ENCODE measurements at regions of chr1 and their contacts with region 1.

Region 1: DNA sequence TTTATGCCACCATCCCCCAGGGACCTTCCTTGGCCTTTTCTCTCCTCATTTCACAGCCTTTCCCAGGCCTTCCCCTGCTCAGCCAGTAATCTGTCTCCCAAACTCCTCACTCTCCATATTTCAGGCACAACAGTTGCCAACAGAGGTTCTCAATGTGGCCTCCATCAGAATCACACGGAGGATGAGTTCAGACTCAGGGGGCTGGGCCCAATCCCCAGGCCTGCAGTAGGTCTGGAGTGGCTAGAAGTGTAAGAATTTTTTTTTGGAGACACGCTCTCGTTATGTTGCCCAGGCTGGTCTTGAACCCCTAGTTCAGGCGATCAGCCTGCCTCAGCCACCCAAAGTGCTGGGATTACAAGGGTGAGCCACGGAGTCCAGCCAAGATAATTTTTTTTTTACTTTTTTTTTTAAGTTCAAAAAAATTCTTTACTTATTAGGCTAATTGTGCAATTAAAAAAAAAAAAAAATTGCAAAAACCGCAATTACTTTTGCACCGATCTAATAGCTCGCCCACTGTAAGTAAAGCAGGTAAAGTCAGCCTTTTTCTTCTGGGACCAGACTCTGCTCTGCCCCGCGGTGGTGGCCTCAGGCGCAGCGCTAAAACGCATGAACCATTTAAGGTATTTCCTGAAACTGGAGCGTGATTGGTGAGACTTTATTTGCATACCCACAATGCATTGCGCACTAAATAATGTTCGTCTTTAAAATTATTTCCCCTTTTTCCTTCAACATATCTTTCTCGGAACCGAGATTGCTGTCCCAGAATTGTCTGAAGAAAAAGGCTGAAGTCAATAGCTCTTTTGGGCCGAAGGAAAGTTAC is 18.7 kb downstream of the KIAA2013 start:
- DNase-seq: peak; percentile 69 to 96 (median 94)
- ATAC-seq: peak; percentile 75
- H3K4me3 ChIP-seq: peak overlapping the region; percentile 92
- H3K4me3 Mint-ChIP-seq: peak overlapping the region; percentile 92 to 97 (median 94)
- H3K27ac ChIP-seq: peak overlapping the region; percentile 99
- H3K27ac Mint-ChIP-seq: peak overlapping the region; percentile 99 to 100 (median 100)
- H3K4me1 ChIP-seq: peaks cover 19% of the 10 kb centered on the region in 2 donors
- H3K4me1 Mint-ChIP-seq: peaks cover 9 to 45% (median 34%) of the 10 kb centered on the region in 7 donors
- H3K27me3 ChIP-seq: peaks cover 0 to 4% of the 10 kb centered on the region in 2 donors
- H3K27me3 Mint-ChIP-seq: peaks cover 0 to 41% (median under 1%) of the 10 kb centered on the region in 5 donors

Region 2: DNA sequence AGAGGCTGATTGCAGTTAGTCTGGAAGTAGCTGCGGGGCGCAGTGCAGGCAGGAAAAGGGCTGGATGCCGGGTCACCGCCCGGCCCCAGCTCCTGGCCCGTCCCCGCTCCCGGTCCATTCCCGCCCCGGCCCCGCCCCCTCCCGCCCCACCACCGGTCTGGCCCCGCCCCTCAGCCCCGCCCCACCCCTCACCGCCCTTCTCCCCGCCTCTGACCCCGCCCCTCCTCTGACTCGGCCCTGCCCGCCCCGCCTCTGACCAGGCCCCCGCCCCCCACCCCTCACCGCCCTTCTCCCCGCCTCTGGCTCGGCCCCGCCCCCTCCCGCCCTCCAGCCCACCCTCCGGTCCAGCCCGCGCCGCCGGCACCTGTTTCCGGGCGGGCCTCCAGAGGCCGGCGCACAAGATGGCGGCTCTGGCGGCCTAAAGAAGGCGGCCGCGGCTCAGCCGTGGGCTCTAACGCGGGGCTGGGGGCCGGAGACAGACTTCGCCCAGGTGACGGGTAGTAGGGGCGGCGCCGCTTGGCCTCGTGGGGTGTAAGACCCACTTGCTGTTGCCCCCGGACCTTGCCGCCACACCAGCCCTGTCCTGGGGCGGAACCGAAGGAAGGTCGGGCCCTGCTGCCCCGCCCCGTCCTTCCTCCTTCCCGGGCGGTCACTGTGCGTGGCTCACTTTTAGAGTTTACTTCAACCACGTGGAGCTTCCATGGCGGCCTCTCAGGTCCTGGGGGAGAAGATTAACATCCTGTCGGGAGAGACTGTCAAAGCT is 634.5 kb before region 1 on chr1 and contains the start of gene UBIAD1:
- CTCF ChIA-PET with region 1: no interaction called
- POLR2A ChIA-PET with region 1: no interaction called
- intact Hi-C with region 1: loop called in 1 of 2 experiments (anchors 1 kb)
- DNase-seq: peak; percentile 66 to 84 (median 72)
- ATAC-seq: peak; percentile 93
- H3K4me3 ChIP-seq: peak within 1 kb of the TSS; percentile 71
- H3K4me3 Mint-ChIP-seq: peak within 1 kb of the TSS; percentile 84 to 99 (median 96)
- H3K27ac ChIP-seq: peak within 1 kb of the TSS; percentile 97
- H3K27ac Mint-ChIP-seq: peak within 1 kb of the TSS; percentile 90 to 96 (median 92)
- H3K4me1 ChIP-seq: peaks cover 21 to 30% of the 10 kb centered on the region in 2 donors
- H3K4me1 Mint-ChIP-seq: peaks cover 23 to 41% (median 32%) of the 10 kb centered on the region in 7 donors
- H3K27me3 ChIP-seq: no peaks in the 10 kb centered on the region
- H3K27me3 Mint-ChIP-seq: peaks cover 0 to 6% (median 0%) of the 10 kb centered on the region in 5 donors
- total RNA-seq, gene UBIAD1: 21.7 to 41.7 (median 32.9) TPM

Region 3: DNA sequence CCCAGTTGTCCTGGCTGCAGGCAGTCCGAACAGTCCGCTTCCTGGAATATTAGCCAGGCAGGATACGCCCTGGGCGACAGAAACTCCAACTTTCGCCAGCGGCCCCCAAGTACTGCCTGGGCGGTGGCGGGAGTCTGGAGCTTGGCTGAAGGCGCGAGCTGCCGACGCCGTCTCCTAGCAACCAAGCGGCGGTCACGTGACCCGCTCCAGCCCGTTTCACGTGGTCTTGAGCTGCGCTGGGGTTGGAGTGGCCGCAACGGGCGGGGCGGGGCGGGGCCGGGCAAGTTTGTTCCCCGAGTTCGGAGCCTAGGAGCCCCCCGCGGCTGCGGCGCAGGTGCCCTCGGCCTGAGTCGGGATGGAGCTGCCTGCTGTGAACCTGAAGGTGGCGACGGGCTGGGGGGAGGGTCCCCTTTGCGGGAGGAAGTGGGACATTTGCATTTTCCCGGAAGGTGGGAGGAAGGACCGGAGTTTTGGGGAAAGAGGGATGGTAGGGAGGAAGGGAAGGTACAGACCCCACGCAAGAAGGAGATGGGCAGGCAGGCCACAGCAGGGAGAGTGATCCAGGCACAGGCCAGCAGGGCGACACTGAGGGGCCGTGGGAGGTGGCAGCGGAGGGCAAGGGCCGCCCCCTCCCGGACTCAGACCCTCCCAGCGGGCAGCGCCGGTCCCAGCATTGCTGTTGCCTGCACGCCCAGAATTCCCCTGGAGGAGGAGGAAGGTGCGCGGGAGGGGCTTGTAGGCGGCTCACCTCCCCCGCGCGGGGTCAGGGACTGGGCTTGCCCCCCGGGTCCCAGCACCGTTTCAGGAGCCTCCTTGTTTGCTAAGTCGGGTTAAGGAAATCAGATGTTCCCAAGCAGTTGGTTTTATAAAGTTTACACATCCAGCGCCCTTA is 171.4 kb before region 1 on chr1 and contains the start of gene AGTRAP:
- CTCF ChIA-PET with region 1: no interaction called
- POLR2A ChIA-PET with region 1: interaction called, 13 read pairs
- intact Hi-C with region 1: loop called (anchors 1 to 5 kb)
- DNase-seq: peak; percentile 62 to 84 (median 71)
- ATAC-seq: peak; percentile 78
- H3K4me3 ChIP-seq: peak within 1 kb of the TSS; percentile 92
- H3K4me3 Mint-ChIP-seq: peak within 1 kb of the TSS; percentile 84 to 96 (median 92)
- H3K27ac ChIP-seq: peak within 1 kb of the TSS; percentile 79
- H3K27ac Mint-ChIP-seq: peak within 1 kb of the TSS; percentile 3 to 95 (median 83)
- H3K4me1 ChIP-seq: peaks cover 38 to 52% of the 10 kb centered on the region in 2 donors
- H3K4me1 Mint-ChIP-seq: peaks cover 51 to 80% (median 76%) of the 10 kb centered on the region in 7 donors
- H3K27me3 ChIP-seq: no peaks in the 10 kb centered on the region
- H3K27me3 Mint-ChIP-seq: no peaks in the 10 kb centered on the region
- total RNA-seq, gene AGTRAP: 28.2 to 82.5 (median 32.7) TPM

Region 4: GRCh38 chr1:11862890-11863289 is 44.6 kb before region 1 on chr1:
- CTCF ChIA-PET with region 1: no interaction called
- POLR2A ChIA-PET with region 1: interaction called, 3 read pairs
- intact Hi-C with region 1: loop called in 1 of 2 experiments (anchors 1 kb)
- DNase-seq: no peak
- ATAC-seq: no peak
- H3K4me3 ChIP-seq: no peak overlapping the region
- H3K4me3 Mint-ChIP-seq: no peak overlapping the region
- H3K27ac ChIP-seq: no peak overlapping the region
- H3K27ac Mint-ChIP-seq: no peak overlapping the region
- H3K4me1 ChIP-seq: no peaks in the 10 kb centered on the region
- H3K4me1 Mint-ChIP-seq: peaks cover 0 to 4% (median 0%) of the 10 kb centered on the region in 7 donors
- H3K27me3 ChIP-seq: peaks cover 0 to 11% of the 10 kb centered on the region in 2 donors
- H3K27me3 Mint-ChIP-seq: peaks cover 35 to 47% (median 42%) of the 10 kb centered on the region in 5 donors

Region 5: DNA sequence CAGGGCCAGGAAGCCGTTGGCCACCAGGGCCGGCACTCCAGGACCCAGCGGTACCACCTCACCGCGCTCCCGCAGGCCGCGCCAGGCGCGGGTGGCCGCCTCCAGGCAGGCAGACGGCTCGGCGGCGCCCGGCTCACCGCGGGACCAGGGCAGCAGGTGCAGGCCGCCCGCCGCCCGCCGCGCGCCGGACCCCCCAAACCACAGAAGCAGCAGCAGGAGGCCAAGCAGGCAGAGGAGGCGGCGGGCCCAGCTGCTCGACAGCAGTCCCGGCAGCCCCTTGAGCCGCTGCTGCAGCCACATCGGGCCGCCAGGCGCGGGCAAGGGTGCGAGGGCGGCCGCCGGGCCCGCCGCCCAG is 18.4 kb after region 1 on chr1:
- CTCF ChIA-PET with region 1: interaction called, 3 read pairs
- POLR2A ChIA-PET with region 1: interaction called, 59 read pairs
- intact Hi-C with region 1: loop called (anchors 1 kb)
- DNase-seq: peak in 3 of 9 donors; percentile 22 to 27 (median 23)
- ATAC-seq: peak; percentile 28
- H3K4me3 ChIP-seq: no peak overlapping the region
- H3K4me3 Mint-ChIP-seq: peak overlapping the region in 4 of 10 donors; percentile 82 to 90 (median 84)
- H3K27ac ChIP-seq: peak overlapping the region; percentile 7
- H3K27ac Mint-ChIP-seq: peak overlapping the region in 4 of 9 donors; percentile 60 to 81 (median 71)
- H3K4me1 ChIP-seq: peaks cover 14 to 28% of the 10 kb centered on the region in 2 donors
- H3K4me1 Mint-ChIP-seq: peaks cover 24 to 50% (median 31%) of the 10 kb centered on the region in 7 donors
- H3K27me3 ChIP-seq: no peaks in the 10 kb centered on the region
- H3K27me3 Mint-ChIP-seq: no peaks in the 10 kb centered on the region

Region 6: GRCh38 chr1:12019858-12020509 is 112.5 kb after region 1 on chr1:
- CTCF ChIA-PET with region 1: interaction called, 3 read pairs
- POLR2A ChIA-PET with region 1: interaction called, 40 read pairs
- intact Hi-C with region 1: loop called (anchors 1 kb)
- DNase-seq: no peak
- ATAC-seq: no peak
- H3K4me3 ChIP-seq: peak overlapping the region; percentile 77
- H3K4me3 Mint-ChIP-seq: peak overlapping the region; percentile 82 to 99 (median 92)
- H3K27ac ChIP-seq: peak overlapping the region; percentile 73
- H3K27ac Mint-ChIP-seq: peak overlapping the region in 8 of 9 donors; percentile 43 to 97 (median 89)
- H3K4me1 ChIP-seq: no peaks in the 10 kb centered on the region
- H3K4me1 Mint-ChIP-seq: peaks cover 0 to 35% (median 17%) of the 10 kb centered on the region in 7 donors
- H3K27me3 ChIP-seq: no peaks in the 10 kb centered on the region
- H3K27me3 Mint-ChIP-seq: peaks cover 0 to 3% (median 0%) of the 10 kb centered on the region in 5 donors

Region 7: DNA sequence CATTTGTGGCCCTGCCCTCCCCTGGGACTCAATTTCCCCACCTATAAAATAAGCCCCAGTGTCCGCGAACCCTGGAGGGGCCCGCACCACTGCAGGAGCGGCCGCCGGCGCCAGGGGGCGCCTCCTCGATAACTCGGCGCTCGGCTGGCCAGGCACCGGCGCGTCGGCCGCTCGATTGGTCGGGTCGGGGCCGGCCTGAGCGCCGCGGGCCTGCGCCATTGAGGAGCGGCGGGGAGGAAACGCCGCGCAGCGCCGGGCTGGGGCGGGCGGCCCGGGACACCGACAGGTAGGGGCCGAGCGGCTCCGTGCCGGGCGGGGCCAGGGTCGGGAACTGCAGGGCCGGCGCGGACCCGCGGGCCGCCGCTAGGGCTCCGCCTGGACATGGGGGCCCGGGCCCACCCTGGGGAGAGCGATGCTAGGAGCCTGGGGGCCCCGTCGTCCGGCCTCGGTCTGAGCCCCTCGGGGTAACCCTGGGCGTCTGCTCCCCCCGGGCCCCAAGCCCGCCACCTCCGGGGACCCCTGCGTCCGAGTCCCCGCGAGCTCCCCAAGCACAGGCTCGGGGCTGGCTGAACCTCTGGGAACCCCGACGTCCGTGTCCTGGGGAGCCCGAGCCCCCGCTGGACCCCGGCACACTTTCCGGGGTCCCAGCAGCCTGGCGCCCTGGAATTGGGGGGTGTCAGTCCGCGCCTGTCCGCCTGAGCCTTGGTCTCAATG is 322.5 kb after region 1 on chr1 and contains the start of gene VPS13D:
- CTCF ChIA-PET with region 1: no interaction called
- POLR2A ChIA-PET with region 1: interaction called, 3 read pairs
- intact Hi-C with region 1: loop called in 1 of 2 experiments (anchors 2 kb)
- DNase-seq: peak; percentile 70 to 89 (median 84)
- ATAC-seq: peak; percentile 98
- H3K4me3 ChIP-seq: peak within 1 kb of the TSS; percentile 82
- H3K4me3 Mint-ChIP-seq: peak within 1 kb of the TSS; percentile 84 to 95 (median 90)
- H3K27ac ChIP-seq: peak within 1 kb of the TSS; percentile 92
- H3K27ac Mint-ChIP-seq: peak within 1 kb of the TSS; percentile 63 to 91 (median 85)
- H3K4me1 ChIP-seq: peaks cover 19 to 21% of the 10 kb centered on the region in 2 donors
- H3K4me1 Mint-ChIP-seq: peaks cover 4 to 38% (median 27%) of the 10 kb centered on the region in 7 donors
- H3K27me3 ChIP-seq: no peaks in the 10 kb centered on the region
- H3K27me3 Mint-ChIP-seq: peaks cover 0 to 6% (median 0%) of the 10 kb centered on the region in 5 donors
- total RNA-seq, gene VPS13D: 43.8 to 94.4 (median 77.3) TPM